Aorta (tissue), 5 donors: ENCODE measurements at regions of chr14 and their contacts with region 1.

Region 1: DNA sequence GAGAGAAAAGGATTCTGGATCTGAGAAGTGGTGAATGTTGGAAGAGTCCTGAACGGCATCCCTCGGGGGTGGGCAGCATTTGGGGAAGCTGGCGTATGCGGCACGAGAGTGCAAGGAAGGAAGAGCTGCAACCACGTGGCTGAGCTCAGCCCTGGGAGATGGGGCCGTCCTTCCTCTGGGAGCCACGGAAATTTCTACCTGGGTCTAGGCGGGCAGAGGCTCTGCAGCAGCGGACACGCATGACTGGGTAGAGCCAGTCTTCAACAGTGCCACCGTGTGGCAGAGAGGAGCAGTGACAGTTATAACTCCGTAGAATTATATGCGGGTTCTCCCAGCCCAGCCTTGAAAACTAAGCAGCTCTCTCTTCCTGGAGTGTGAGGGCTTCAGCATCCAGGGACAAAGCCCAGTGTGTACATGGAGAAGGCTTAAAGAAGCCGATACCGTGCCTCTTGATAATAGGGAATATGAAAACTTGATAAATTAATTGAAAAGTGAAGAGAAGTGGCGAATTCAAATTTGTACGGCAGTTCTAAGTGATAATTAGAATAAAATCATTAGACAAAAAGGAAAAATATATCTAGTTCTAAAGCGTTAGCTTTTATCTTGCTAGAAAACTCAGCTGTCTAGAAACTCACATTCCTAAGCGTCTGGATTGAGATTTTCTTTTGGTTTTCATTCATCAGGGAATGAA is 82.9 kb upstream of the STXBP6 start:
- DNase-seq: peak; percentile 66 to 81
- ATAC-seq: peak; percentile 88
- H3K4me3 ChIP-seq: no peak overlapping the region
- H3K27ac ChIP-seq: no peak overlapping the region
- H3K4me1 ChIP-seq: no peaks in the 10 kb centered on the region
- H3K27me3 ChIP-seq: no peaks in the 10 kb centered on the region

Region 2: DNA sequence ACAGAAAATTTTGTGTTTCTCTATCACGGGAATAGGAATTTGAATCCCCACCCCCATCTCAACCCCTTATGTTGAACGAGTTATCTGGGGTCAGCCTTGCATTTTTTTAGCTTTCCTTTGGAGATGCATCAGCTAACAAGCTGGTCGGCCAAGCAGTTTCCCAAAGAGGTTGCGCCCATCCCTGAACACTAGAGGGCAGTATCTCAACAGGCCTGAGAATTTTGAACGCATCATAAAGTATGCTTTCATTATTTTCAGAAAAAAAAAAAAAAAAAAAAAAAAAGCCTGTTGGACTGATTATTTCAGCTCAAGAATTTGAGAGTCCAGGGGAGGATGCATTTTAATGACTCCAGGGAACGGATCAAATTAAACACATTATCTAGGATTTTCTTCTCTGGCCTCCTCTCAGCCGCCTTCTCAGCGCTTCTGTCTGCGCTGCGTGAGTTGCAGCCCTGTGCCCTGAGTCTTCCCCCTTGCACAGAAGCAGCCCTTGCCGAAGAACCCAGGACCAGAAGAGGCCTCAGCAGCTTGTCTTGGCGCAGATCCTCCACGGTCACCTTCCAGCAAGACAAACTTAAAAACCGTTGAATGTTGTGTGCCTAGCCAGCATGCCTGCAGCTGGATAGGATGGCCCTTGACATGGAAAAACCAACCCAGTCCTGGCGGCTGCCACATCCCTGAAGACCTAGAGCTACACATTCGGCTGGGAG is 422.3 kb before region 1 on chr14:
- intact Hi-C with region 1: loop called in 1 of 2 experiments (anchors 5 kb)
- DNase-seq: peak in 1 of 2 donors; percentile 55
- ATAC-seq: peak; percentile 76
- H3K4me3 ChIP-seq: no peak overlapping the region
- H3K27ac ChIP-seq: no peak overlapping the region
- H3K4me1 ChIP-seq: no peaks in the 10 kb centered on the region
- H3K27me3 ChIP-seq: no peaks in the 10 kb centered on the region

Region 3: DNA sequence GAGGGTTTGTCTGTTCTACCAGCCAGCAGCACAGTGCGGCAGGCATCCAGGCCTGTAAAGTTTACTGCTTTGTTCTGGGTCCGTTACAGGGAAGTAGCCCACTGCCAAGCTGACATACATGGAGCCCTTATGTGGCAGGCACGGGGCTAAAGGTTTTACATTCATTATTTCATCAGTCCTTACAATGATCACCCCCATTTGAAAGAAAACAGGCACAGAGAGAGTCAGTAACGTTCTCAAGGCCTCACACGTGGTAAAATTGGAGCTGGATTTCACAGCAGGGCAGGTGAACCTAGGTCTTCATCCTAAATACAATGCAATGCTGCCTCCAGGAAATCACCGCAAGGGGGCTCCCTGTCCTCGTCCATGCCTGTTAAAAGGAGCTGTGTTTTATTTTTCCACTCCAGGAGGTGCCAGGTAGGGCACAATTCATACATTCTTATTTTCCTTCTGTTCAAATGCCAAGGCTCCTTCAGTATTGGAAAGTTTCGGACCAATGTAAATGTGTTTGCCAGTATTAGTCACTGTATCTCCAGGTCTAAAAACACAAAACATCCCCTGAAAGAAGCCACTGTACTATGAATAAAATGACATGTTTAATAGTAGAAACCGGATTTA is 326.7 kb before region 1 on chr14:
- intact Hi-C with region 1: loop called in 1 of 2 experiments (anchors 5 kb)
- DNase-seq: peak; percentile 70 to 79
- ATAC-seq: no peak
- H3K4me3 ChIP-seq: no peak overlapping the region
- H3K27ac ChIP-seq: no peak overlapping the region
- H3K4me1 ChIP-seq: no peaks in the 10 kb centered on the region
- H3K27me3 ChIP-seq: no peaks in the 10 kb centered on the region

Region 4: DNA sequence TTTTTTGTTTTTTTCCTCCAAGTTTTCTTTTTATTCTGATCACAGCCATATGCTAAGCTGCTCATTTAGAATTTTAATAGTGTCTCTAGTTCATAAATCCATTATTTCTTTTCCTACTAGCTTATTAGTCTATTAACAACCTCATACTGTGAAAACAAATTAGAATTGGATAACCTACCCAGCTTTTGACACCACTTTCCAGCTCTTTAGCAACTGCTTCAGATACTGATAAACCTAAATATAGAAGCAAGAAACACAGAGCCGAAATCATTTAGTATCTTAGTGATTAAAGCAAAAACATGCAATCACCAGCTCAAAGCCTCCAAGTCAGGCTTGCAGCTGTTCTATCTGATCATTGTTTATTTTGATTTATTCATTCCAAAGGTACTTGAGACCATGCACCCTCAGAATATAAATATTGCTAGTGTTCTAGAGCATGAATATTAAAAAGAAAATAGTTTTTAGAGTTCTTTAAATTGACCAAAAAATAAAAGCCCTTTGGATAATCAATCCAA is 204.4 kb before region 1 on chr14:
- intact Hi-C with region 1: no loop called
- DNase-seq: no peak
- ATAC-seq: no peak
- H3K4me3 ChIP-seq: no peak overlapping the region
- H3K27ac ChIP-seq: no peak overlapping the region
- H3K4me1 ChIP-seq: no peaks in the 10 kb centered on the region
- H3K27me3 ChIP-seq: no peaks in the 10 kb centered on the region

Region 5: DNA sequence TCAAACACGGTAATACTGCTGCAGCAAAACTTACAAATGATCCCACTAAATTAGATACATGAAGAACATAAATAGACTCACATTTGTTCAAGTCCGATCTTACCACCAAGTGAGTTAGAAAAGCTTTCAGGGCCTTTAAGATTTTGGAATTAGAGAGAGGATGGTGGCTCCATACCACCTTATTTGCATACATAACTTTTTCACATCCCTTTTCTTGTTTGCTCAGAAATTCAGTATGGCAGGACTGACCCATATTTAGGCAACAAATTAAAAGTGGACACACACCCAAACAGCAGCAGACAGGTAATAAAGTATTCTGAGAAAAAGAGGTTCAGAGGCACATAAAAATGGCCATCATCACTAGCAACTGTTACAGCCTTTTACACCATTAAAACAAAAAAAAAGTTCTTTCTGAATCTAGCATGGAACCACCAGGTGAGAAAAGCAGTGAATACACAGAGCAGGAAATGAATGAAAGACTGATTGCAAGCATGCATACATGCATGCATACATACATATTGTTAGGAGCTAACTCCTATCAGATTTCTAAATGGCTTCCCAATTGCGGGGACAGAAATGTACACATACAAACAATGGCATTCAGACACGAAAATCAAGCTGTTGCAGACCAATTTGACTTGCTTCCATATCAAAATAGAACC is 106.3 kb before region 1 on chr14:
- intact Hi-C with region 1: loop called in 1 of 2 experiments (anchors 10 kb)
- DNase-seq: no peak
- ATAC-seq: no peak
- H3K4me3 ChIP-seq: no peak overlapping the region
- H3K27ac ChIP-seq: no peak overlapping the region
- H3K4me1 ChIP-seq: no peaks in the 10 kb centered on the region
- H3K27me3 ChIP-seq: no peaks in the 10 kb centered on the region

Region 6: DNA sequence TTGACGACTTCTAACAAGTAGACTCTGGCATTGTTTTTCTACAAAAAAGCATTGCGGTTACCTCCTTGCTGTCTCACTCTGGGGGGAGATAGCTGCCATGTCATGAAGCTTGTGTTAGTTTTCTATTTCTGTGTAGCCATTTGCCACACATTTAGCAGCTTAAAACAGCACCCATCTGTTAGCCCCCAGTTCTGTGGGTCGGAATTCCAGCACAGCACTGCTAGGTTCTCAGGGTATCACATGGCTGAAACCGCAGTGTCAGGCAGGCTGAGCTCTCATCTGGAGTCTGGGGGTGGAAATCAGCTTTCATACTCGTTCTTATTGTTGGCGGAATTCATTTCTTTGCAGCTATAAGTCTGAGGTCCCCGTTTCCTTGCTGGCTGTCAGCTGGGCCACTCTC is 63.0 kb before region 1 on chr14:
- intact Hi-C with region 1: loop called in 1 of 2 experiments (anchors 5 kb)
- DNase-seq: no peak
- ATAC-seq: no peak
- H3K4me3 ChIP-seq: no peak overlapping the region
- H3K27ac ChIP-seq: no peak overlapping the region
- H3K4me1 ChIP-seq: no peaks in the 10 kb centered on the region
- H3K27me3 ChIP-seq: peaks cover 0 to 2% of the 10 kb centered on the region in 2 donors